ENCODE measurements at regions of chr12 and their contacts with region 1.

Region 1: GRCh38 chr12:54191550-54192022 is 2.8 kb upstream of the SMUG1 start:
- DNase-seq: peak; percentile 72 to 80
- ATAC-seq: peak; percentile 43 to 71 (median 60)
- H3K4me3 ChIP-seq: no peak overlapping the region
- H3K27ac ChIP-seq: no peak overlapping the region
- H3K4me1 ChIP-seq: peaks cover 0 to 34% (median 14%) of the 10 kb centered on the region in 9 donors
- H3K27me3 ChIP-seq: peaks cover 0 to 69% (median 63%) of the 10 kb centered on the region in 7 donors
- CTCF ChIP-seq: peak; percentile 73 to 87 (median 82)

Region 2: DNA sequence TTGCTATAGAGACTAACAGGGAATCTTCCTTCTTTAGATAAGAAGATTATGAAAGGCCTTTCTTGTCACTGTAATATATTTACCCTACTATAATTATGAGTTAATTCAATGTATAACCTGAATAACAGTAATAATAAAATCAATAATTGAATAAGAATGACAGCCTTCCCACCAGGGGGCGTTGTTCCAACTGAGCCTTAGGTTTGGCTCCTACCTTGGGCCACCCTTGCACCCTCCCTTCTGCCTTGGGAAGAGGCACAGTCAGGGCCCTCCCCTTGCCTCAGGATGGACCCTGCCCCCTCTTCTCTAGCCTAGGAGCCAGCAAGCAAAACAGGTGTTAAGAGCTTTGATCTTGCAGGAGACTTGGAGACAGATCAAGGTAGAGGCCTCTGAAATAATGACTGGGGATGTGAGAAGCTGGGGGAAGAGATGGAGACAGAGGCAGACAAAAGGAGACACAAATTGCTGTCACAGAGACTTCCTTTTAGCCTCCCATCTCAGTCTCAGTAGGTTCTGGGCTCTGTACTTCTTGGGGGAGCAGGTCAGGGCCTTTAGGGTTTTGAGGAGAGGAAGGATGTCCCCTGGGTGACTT is 399.8 kb before region 1 on chr12:
- intact Hi-C with region 1: loop called in 1 of 10 experiments (anchors 10 kb)
- DNase-seq: no peak
- ATAC-seq: no peak
- H3K4me3 ChIP-seq: no peak overlapping the region
- H3K27ac ChIP-seq: no peak overlapping the region
- H3K4me1 ChIP-seq: no peaks in the 10 kb centered on the region
- H3K27me3 ChIP-seq: peaks cover 0 to 83% (median 66%) of the 10 kb centered on the region in 7 donors
- CTCF ChIP-seq: peak in 8 of 9 donors; percentile 15 to 53 (median 31)

Measured in heart right ventricle (tissue), 16 donors.